Left ventricle myocardium superior (tissue), 1 donor: ENCODE measurements at regions of chr17 and their contacts with region 1.

Region 1: DNA sequence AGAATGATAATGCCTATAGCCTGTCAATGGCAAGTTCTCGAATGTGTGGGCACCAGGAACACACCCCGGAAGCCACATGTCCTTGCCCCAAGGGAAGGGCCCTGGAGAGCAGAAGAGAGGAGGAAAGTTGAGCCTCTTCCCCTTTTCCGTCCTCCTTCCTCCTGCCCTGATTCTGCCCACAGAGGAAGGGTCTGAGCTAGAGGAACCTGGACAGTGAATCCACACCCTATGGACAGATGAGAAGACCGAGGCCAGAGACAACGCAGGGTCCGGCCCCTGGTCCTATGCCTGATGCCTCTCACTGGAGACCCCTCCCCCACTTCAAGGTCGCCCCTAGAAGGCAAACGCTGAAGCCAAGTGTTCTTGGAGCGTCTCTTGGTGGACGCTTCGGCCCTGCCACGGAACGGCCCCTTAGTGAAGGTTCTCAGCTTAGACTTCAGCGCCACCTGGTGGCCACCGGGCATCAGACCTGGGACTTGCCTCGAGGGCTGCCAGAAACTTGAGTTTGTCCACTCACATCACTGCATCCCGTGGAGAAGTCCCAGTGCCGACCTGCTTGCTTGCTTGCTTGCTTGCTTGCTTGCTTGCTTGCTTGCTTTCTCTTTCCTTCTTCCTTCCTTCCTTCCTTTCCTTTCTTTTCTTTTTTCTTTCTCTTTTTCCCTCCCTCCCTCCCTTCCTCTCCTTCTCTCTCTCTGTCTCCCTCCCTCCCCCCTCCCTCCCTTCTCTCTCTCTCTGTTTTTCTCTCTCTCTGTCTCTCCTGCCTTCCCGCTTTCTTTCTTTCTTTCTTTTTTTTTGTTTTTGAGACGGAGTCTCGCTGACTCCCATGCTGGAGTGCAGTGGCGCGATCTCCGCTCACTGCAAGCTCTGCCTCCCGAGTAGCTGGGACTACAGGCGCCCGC is 20.6 kb upstream of the SPNS3 start:
- DNase-seq: peak; percentile 96
- ATAC-seq: peak; percentile 97

Region 2: DNA sequence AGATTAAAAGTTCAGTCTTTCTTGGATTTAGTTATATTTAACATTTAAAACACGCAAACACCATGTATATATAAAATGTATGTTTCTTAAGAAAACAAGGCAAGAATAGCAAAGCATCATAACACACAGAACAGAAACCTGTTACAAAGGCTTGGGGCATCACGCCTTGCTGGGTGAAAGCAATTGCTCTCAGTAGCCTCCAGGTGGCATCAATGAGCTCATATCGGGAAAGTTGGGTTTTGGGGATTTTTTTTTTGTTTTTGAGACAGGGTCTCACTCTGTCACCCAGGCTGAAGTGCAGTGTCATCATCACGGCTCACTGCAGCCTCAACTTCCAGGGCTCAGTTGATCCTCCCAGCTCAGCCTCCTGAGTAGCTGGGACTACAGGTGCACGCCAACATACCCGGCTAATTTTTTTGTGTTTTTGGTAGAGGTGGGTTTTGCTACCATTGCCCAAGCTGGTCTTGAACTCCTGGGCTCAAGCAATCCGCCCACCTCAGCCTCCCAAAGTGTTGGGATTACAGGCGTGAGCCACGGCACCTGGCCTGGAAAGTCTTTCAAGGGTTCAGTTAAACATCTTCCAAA is 213.3 kb before region 1 on chr17:
- intact Hi-C with region 1: loop called (anchors 5 kb)
- DNase-seq: no peak
- ATAC-seq: peak; percentile 24

Region 3: GRCh38 chr17:4375039-4375748 is 38.0 kb before region 1 on chr17:
- intact Hi-C with region 1: no loop called
- DNase-seq: no peak
- ATAC-seq: no peak

Region 4: DNA sequence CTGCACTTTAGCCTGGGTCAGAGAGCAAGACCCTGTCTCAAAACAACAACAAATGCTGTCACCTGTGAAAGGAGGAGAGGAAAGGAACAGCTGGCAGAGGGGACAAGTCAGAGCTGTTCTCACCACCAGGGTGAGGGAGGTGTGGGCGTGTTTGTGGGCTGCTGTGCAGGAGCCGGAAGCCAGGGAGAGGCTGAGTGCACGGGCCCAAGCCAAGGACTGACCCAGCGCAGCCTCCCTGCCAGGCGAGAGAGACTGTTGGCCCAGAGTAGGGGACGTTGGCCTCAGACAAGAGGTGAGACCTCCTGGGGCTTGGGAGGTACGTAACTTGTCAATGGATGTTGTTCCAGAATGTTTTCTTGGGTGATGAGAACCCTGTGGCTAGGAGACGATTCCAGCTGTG is 96.2 kb after region 1 on chr17:
- intact Hi-C with region 1: no loop called
- DNase-seq: no peak
- ATAC-seq: peak; percentile 29